AG04449 (cell line): ENCODE measurements at regions of chr1 and their contacts with region 1.

Region 1: DNA sequence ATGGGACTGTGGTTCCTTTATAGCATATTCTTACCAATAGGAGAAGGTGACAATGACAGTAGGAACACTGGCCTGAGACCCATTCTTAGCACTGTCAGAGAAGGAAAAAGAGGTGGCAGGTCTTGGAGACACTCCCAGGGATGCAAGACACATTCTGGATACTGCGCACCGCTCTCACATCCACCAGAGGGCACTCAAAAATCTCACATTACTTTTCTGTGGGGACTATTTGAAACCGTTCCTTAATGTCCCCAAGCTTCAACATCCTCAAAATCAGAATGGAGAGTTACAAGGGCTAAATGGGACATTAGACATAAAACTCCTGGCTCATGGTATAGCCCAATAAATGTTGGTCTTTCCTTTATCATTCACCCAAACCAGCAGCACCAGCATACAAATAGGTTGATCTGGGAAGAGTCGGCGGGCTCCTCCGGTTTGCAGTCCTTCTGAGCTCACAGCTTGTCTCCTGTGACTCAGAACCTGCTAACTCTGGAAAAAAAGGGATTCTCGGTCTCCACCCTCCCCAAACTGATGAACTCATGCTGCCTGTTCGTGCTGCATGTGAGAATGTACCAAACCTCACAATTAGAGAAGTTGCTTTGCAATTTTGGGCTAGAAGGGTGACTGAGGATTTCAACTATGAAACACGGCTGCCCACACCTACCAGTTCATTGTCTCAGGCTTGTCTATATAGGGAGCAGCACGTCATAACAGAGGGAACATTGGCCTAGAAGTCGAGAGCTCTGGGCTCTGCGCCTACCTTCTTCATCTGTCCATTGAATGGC is 40.2 kb downstream of the IL12RB2 start:
- DNase-seq: no peak
- H3K4me3 ChIP-seq: peak overlapping the region; percentile 27
- CTCF ChIP-seq: peak; percentile 71

Region 2: GRCh38 chr1:67430352-67431155 is 82.7 kb after region 1 on chr1 and contains the start of gene SERBP1:
- CTCF ChIA-PET with region 1: interaction called, 35 read pairs
- POLR2A ChIA-PET with region 1: no interaction called
- DNase-seq: peak; percentile 70
- H3K4me3 ChIP-seq: peak within 1 kb of the TSS; percentile 91
- CTCF ChIP-seq: no peak

Region 3: GRCh38 chr1:67489643-67490042 is 141.8 kb after region 1 on chr1:
- CTCF ChIA-PET with region 1: interaction called, 90 read pairs
- POLR2A ChIA-PET with region 1: no interaction called
- DNase-seq: no peak
- H3K4me3 ChIP-seq: no peak overlapping the region
- CTCF ChIP-seq: no peak